ENCODE measurements at regions of chr2 and their contacts with region 1.

Region 1: GRCh38 chr2:240646176-240646899 is 21.1 kb downstream of the GPR35 start:
- DNase-seq: no peak
- H3K4me3 ChIP-seq: no peak overlapping the region
- H3K27ac ChIP-seq: no peak overlapping the region
- H3K4me1 ChIP-seq: no peaks in the 10 kb centered on the region
- H3K27me3 ChIP-seq: peaks cover 11% of the 10 kb centered on the region
- CTCF ChIP-seq: no peak

Region 2: DNA sequence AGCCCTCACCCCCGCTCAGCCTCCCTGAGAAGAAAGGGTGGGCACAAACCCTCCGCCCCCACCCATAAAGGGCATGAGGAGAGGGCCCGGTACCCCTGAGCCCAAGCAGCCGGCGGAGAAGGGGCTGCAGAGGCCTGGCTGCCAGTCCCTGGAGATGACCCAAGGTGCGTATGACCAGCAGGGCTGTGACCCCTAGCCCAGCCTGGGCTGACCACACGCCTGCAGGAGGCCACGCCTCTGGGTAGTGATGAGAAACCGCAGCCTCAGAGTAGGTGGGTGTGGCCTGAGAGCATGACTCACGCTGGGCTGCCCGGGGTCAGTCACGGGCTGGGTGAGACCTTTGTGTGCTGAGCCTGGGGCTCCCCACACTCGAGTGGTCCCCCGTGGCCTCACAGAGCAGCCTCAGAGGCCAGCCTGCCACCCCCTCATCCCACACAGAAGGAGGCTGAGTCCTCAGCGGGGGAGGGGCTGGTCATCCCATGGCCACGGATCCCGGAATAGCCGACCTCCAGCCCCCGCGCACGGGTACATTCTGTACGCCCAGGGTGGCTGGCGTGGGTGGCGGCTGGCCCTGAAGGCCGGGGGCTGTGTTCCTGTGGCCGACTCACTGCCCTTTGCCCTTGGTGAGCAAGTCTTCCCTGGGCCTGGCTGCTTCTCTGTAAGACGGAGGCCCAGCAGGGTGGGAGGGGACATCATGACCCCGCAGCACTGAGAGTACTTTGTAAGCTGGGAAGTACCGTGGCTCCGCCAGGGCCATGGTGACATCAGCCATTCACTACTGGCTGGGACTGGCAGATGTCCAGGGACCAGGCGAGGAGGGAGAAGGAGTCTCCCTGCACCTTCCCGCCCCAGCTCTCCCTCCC is 395.1 kb before region 1 on chr2:
- CTCF ChIA-PET with region 1: no interaction called
- dilution Hi-C with region 1: no loop called
- in situ Hi-C with region 1: no loop called
- intact Hi-C with region 1: no loop called
- DNase-seq: peak; percentile 83
- H3K4me3 ChIP-seq: peak overlapping the region in 2 of 3 experiments; percentile 21 to 33
- H3K27ac ChIP-seq: peak overlapping the region; percentile 30
- H3K4me1 ChIP-seq: peaks cover 35% of the 10 kb centered on the region
- H3K27me3 ChIP-seq: no peaks in the 10 kb centered on the region
- CTCF ChIP-seq: no peak

Region 3: GRCh38 chr2:240452457-240453256 is 193.7 kb before region 1 on chr2:
- CTCF ChIA-PET with region 1: no interaction called
- dilution Hi-C with region 1: no loop called
- in situ Hi-C with region 1: no loop called
- intact Hi-C with region 1: no loop called
- DNase-seq: peak; percentile 39
- H3K4me3 ChIP-seq: peak overlapping the region; percentile 14 to 62 (median 50)
- H3K27ac ChIP-seq: no peak overlapping the region
- H3K4me1 ChIP-seq: peaks cover 76% of the 10 kb centered on the region
- H3K27me3 ChIP-seq: no peaks in the 10 kb centered on the region
- CTCF ChIP-seq: no peak

Region 4: GRCh38 chr2:240593703-240594451 is 52.5 kb before region 1 on chr2:
- CTCF ChIA-PET with region 1: no interaction called
- dilution Hi-C with region 1: loop called (anchors 5 kb)
- in situ Hi-C with region 1: no loop called
- intact Hi-C with region 1: no loop called
- DNase-seq: no peak
- H3K4me3 ChIP-seq: no peak overlapping the region
- H3K27ac ChIP-seq: no peak overlapping the region
- H3K4me1 ChIP-seq: no peaks in the 10 kb centered on the region
- H3K27me3 ChIP-seq: no peaks in the 10 kb centered on the region
- CTCF ChIP-seq: no peak